Caco-2 (cell line): ENCODE measurements at regions of chr11 and their contacts with region 1.

Region 1: DNA sequence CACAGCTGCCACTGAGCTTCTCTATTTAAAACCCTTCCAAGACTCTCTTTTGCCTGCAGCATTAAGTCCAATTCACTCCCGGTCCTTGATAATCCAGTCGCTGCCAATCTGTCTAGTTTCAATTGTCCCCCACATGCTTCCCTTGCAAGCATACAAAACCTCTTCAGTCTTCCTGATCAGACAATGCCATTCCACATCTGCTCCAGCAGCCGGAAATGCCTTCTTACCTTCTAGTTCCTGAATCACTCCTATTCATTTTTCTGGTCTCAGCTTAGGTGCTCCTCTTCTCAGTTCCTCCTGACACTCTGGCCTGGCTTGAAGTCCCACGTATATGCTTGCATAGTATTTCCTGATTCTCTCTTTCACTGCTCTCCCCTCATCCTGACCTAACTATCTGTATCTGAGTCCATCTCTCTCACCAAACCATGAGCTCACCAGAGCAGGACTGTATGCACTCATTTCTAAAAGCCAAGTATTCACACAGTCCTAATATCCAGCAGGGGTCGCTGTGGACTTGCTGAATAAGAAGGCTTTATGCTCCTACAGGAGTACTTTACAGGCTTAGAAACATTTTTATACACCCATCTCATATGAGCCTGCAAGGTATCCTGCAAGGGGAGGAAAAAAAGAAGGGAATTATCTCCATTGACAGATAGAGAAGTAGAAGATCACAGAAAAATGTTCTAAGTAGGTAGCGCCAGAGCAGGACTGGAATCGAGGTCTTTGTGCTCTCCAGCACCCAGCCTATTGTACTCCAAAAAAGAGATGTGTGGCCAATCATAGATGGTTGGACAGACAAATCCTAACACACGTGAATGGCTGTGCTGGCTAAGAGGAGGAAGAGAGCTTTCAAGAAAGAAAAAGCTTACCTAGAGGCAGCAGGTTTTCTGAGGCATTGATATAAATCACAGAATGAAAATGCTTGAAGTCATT is 19.2 kb downstream of the XRRA1 start:
- DNase-seq: peak; percentile 84
- H3K4me3 ChIP-seq: no peak overlapping the region
- H3K4me3 Mint-ChIP-seq: no peak overlapping the region
- H3K27ac Mint-ChIP-seq: no peak overlapping the region
- H3K4me1 ChIP-seq: 0 out of 2 replicates have a peak, but pooled peaks cover 6% of the 10 kb centered on the region
- H3K4me1 Mint-ChIP-seq: no peaks in the 10 kb centered on the region
- H3K27me3 ChIP-seq: no peaks in the 10 kb centered on the region
- H3K27me3 Mint-ChIP-seq: no peaks in the 10 kb centered on the region
- CTCF ChIP-seq: peak; percentile 96

Region 2: DNA sequence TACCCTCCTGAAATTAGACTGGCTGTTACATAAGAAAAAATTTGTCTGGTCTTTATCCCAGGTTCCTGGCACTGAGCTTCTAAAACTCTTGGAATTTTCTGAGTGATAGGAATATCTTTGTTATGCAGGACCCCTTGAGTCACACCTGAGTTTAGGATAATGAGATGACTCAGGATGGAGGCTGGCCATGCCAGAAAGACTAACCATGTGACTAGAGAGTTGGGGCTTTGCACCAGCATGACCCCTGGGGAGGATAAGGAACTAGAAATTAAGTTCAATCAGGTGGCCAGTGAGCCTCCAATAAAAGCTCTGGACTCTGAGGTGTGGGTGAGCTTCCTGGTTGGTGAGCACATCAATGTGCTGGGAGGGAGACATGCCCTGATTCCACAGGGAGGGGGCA is 69.0 kb before region 1 on chr11:
- CTCF ChIA-PET with region 1: no interaction called
- POLR2A ChIA-PET with region 1: no interaction called
- intact Hi-C with region 1: no loop called
- DNase-seq: no peak
- H3K4me3 ChIP-seq: no peak overlapping the region
- H3K4me3 Mint-ChIP-seq: no peak overlapping the region
- H3K27ac Mint-ChIP-seq: no peak overlapping the region
- H3K4me1 ChIP-seq: no peaks in the 10 kb centered on the region
- H3K4me1 Mint-ChIP-seq: no peaks in the 10 kb centered on the region
- H3K27me3 ChIP-seq: no peaks in the 10 kb centered on the region
- H3K27me3 Mint-ChIP-seq: no peaks in the 10 kb centered on the region
- CTCF ChIP-seq: no peak

Region 3: GRCh38 chr11:74980634-74981033 is 50.9 kb after region 1 on chr11:
- CTCF ChIA-PET with region 1: no interaction called
- POLR2A ChIA-PET with region 1: no interaction called
- intact Hi-C with region 1: no loop called
- DNase-seq: no peak
- H3K4me3 ChIP-seq: no peak overlapping the region
- H3K4me3 Mint-ChIP-seq: no peak overlapping the region
- H3K27ac Mint-ChIP-seq: no peak overlapping the region
- H3K4me1 ChIP-seq: peaks cover 26% of the 10 kb centered on the region
- H3K4me1 Mint-ChIP-seq: peaks cover 9% of the 10 kb centered on the region
- H3K27me3 ChIP-seq: no peaks in the 10 kb centered on the region
- H3K27me3 Mint-ChIP-seq: no peaks in the 10 kb centered on the region
- CTCF ChIP-seq: no peak

Region 4: GRCh38 chr11:75022759-75023396 is 93.2 kb after region 1 on chr11:
- CTCF ChIA-PET with region 1: interaction called, 18 read pairs
- POLR2A ChIA-PET with region 1: no interaction called
- intact Hi-C with region 1: no loop called
- DNase-seq: peak; percentile 89 to 93
- H3K4me3 ChIP-seq: no peak overlapping the region
- H3K4me3 Mint-ChIP-seq: no peak overlapping the region
- H3K27ac Mint-ChIP-seq: no peak overlapping the region
- H3K4me1 ChIP-seq: no peaks in the 10 kb centered on the region
- H3K4me1 Mint-ChIP-seq: no peaks in the 10 kb centered on the region
- H3K27me3 ChIP-seq: no peaks in the 10 kb centered on the region
- H3K27me3 Mint-ChIP-seq: no peaks in the 10 kb centered on the region
- CTCF ChIP-seq: peak; percentile 99 to 100

Region 5: DNA sequence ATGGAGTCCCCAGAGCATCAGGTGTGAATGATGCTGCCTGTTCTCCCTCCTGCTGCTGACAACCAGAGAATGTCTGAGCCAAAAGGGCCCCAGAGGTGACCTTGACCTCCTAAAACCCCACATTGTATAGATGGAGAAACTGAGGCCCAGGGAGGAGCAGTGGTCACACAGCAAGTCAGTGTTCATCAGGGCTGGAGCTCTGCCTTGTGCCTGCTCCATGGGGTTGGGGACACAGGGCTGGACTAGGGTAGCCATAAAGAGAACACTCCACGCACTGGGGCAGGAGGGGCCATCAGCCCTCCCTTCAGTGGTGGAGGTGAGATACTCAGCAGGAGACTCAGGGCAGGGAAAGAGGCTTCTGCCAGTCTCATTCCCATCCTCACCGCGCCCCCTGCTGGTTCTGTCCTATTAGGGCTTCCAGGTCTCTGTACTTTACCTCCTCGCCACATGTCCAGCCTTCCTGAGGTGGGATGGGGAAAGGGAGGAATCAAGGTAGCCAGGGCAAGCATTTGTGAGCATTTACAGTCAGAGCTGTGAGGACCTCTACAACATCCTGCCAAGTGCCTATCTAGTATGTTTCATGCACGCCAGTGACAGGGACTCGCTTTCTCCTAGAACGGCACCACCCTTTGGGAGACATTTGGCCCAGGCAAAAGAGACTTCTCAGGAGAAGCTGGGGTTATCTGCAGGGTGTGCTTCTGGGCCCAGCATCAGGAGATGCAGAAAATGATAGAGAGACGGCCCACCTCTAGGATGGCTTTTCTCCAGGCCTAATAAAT is 102.3 kb after region 1 on chr11:
- CTCF ChIA-PET with region 1: interaction called, 9 read pairs
- POLR2A ChIA-PET with region 1: no interaction called
- intact Hi-C with region 1: loop called (anchors 1 kb)
- DNase-seq: peak; percentile 90 to 92
- H3K4me3 ChIP-seq: no peak overlapping the region
- H3K4me3 Mint-ChIP-seq: no peak overlapping the region
- H3K27ac Mint-ChIP-seq: no peak overlapping the region
- H3K4me1 ChIP-seq: no peaks in the 10 kb centered on the region
- H3K4me1 Mint-ChIP-seq: no peaks in the 10 kb centered on the region
- H3K27me3 ChIP-seq: no peaks in the 10 kb centered on the region
- H3K27me3 Mint-ChIP-seq: peaks cover 9% of the 10 kb centered on the region
- CTCF ChIP-seq: peak; percentile 97 to 98